ENCODE measurements at regions of chr17 and their contacts with region 1.

Region 1: DNA sequence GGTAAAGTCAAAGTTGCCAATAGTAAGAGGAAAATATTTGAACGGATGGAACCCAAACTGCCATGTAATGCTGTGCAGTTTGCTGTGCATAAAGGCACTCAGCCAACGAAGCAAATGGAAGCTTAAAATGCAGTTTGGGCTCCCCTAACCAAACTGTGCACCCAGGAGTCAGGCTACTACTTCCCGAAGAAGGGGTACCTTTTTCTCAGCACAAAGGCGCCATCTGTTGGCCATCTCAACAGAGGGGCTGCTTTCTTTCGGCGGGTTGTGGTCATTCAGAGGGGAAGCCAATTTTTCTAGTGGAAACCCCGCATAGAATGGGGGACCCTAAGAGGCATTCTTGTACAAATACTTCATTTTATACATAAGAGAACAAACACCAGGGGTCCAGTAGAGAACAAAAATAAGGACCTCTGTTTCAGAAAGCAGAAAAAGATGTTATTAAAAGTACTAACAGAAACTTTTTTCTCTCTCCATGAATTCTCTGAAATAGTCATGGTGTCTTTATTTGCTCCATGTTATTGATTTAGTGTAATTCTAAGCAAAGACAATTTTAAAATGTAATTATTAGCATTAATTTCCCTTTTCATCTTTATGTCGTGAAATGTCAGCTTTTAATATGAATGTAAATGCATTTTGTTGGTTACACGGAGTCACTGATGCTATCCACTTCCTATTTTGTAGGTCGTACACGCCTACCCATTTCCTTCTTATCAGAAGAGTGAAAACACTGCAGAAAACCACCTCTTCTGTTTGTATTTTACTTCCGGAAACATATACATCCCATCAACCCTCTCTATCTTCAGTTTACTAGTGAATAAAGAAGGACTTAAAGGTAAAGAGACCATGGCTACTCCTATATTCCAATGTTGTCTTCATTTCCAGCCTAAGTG is 453.3 kb downstream of the KCNJ2 start:
- DNase-seq: peak in 4 of 5 donors; percentile 39 to 58 (median 50)
- ATAC-seq: peak; percentile 59 to 83 (median 76)
- H3K4me3 ChIP-seq: peak overlapping the region in 2 of 12 donors; percentile 15 to 30
- H3K27ac ChIP-seq: no peak overlapping the region
- H3K4me1 ChIP-seq: peaks cover 0 to 22% (median 0%) of the 10 kb centered on the region in 12 donors
- H3K27me3 ChIP-seq: no peaks in the 10 kb centered on the region
- CTCF ChIP-seq: peak; percentile 33 to 68 (median 55)
- POLR2A ChIP-seq: no peak

Region 2: DNA sequence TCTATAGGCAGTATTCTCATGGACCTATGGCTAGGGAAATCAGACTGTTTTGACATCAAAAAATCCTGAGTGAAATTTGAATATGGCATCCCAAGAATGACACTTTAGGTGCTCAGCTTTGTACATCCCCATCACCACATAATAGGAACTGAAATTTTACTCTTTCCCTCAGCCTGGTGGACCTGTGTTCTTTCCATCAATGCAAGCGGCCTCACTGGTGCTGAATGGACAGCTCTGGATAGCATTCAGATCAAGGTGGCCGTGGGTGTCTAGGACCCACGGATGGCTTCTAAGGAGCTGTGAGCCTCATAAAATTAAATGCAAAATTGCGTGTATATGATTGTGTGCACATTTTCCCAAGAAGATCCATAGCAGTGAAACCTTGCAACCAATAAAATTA is 1055.5 kb before region 1 on chr17:
- intact Hi-C with region 1: loop called in 7 of 10 experiments (anchors 1 to 5 kb)
- DNase-seq: no peak
- ATAC-seq: no peak
- H3K4me3 ChIP-seq: no peak overlapping the region
- H3K27ac ChIP-seq: no peak overlapping the region
- H3K4me1 ChIP-seq: peaks cover 0 to 3% (median 0%) of the 10 kb centered on the region in 12 donors
- H3K27me3 ChIP-seq: no peaks in the 10 kb centered on the region
- CTCF ChIP-seq: no peak
- POLR2A ChIP-seq: no peak

Region 3: GRCh38 chr17:69607162-69607834 is 1015.3 kb before region 1 on chr17:
- intact Hi-C with region 1: loop called in 2 of 10 experiments (anchors 2 to 10 kb)
- DNase-seq: peak; percentile 62 to 87 (median 76)
- ATAC-seq: peak; percentile 68 to 92 (median 86)
- H3K4me3 ChIP-seq: no peak overlapping the region
- H3K27ac ChIP-seq: peak overlapping the region; percentile 1 to 81 (median 62)
- H3K4me1 ChIP-seq: peaks cover 5 to 39% (median 33%) of the 10 kb centered on the region in 12 donors
- H3K27me3 ChIP-seq: no peaks in the 10 kb centered on the region
- CTCF ChIP-seq: peak; percentile 79 to 95 (median 89)
- POLR2A ChIP-seq: no peak

Region 4: GRCh38 chr17:70168977-70169708 is 453.5 kb before region 1 on chr17 and contains the start of gene KCNJ2:
- intact Hi-C with region 1: loop called in 7 of 10 experiments (anchors 2 to 10 kb)
- DNase-seq: peak; percentile 92 to 94 (median 94)
- ATAC-seq: peak; percentile 83 to 97 (median 91)
- H3K4me3 ChIP-seq: peak within 1 kb of the TSS; percentile 62 to 87 (median 77)
- H3K27ac ChIP-seq: peak within 1 kb of the TSS; percentile 87 to 98 (median 94)
- H3K4me1 ChIP-seq: peaks cover 0 to 38% (median 4%) of the 10 kb centered on the region in 12 donors
- H3K27me3 ChIP-seq: no peaks in the 10 kb centered on the region
- CTCF ChIP-seq: peak in 1 of 12 donors; percentile 3
- POLR2A ChIP-seq: peak; percentile 61 to 99
- total RNA-seq, gene KCNJ2: 28.8 to 60.7 (median 48.8) TPM

Region 5: GRCh38 chr17:70552230-70552981 is 70.2 kb before region 1 on chr17:
- intact Hi-C with region 1: loop called in 1 of 10 experiments (anchors 10 kb)
- DNase-seq: no peak
- ATAC-seq: peak; percentile 64 to 83 (median 75)
- H3K4me3 ChIP-seq: peak overlapping the region in 5 of 12 donors; percentile 7 to 21 (median 13)
- H3K27ac ChIP-seq: peak overlapping the region in 3 of 12 donors; percentile 7 to 13 (median 9)
- H3K4me1 ChIP-seq: peaks cover 0 to 5% (median 0%) of the 10 kb centered on the region in 12 donors
- H3K27me3 ChIP-seq: no peaks in the 10 kb centered on the region
- CTCF ChIP-seq: peak in 11 of 12 donors; percentile 45 to 69 (median 59)
- POLR2A ChIP-seq: no peak

Measured in heart left ventricle (tissue), 16 donors.